Lower lobe of right lung (tissue), 2 donors: ENCODE measurements at regions of chrX and their contacts with region 1.

Region 1: DNA sequence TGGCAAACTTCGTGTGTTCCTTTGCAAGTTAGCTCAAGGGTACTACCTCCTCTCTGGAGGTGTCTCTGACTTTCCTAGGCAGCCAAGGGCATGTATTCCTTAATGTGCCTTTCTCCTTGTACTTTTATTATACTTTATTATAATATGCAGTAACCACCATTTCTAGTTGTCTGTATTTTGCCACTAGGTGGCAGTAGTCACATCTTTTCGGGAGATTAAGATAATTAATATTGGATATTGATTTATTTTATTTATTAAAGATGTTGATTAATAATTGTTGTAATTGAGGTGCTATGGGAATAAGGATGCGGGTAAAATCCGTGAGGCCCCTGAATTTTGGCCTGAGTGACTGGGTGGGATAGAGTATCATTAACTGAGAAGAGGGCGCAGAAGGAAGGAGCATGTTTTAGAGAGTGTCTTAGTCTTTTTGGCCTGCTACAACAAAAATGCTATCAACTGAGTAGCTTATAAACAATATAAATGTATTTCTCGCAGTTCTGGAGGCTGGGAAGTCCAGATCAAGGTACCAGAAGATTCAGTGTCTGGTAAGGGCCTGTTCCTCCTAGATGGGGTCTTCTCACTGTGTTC is 153.3 kb downstream of the TMEM164 start:
- DNase-seq: no peak
- ATAC-seq: no peak
- H3K4me3 ChIP-seq: no peak overlapping the region
- H3K27ac ChIP-seq: no peak overlapping the region
- H3K4me1 ChIP-seq: no peaks in the 10 kb centered on the region
- H3K27me3 ChIP-seq: no peaks in the 10 kb centered on the region
- CTCF ChIP-seq: peak; percentile 43

Region 2: GRCh38 chrX:109760923-109761253 is 395.4 kb before region 1 on chrX:
- intact Hi-C with region 1: no loop called
- DNase-seq: no peak
- ATAC-seq: peak in 1 of 2 donors; percentile 77
- H3K4me3 ChIP-seq: no peak overlapping the region
- H3K27ac ChIP-seq: peak overlapping the region; percentile 18
- H3K4me1 ChIP-seq: no peaks in the 10 kb centered on the region
- H3K27me3 ChIP-seq: no peaks in the 10 kb centered on the region
- CTCF ChIP-seq: no peak

Region 3: GRCh38 chrX:110310000-110310790 is 153.9 kb after region 1 on chrX:
- intact Hi-C with region 1: no loop called
- DNase-seq: no peak
- ATAC-seq: no peak
- H3K4me3 ChIP-seq: no peak overlapping the region
- H3K27ac ChIP-seq: no peak overlapping the region
- H3K4me1 ChIP-seq: no peaks in the 10 kb centered on the region
- H3K27me3 ChIP-seq: no peaks in the 10 kb centered on the region
- CTCF ChIP-seq: no peak

Region 4: DNA sequence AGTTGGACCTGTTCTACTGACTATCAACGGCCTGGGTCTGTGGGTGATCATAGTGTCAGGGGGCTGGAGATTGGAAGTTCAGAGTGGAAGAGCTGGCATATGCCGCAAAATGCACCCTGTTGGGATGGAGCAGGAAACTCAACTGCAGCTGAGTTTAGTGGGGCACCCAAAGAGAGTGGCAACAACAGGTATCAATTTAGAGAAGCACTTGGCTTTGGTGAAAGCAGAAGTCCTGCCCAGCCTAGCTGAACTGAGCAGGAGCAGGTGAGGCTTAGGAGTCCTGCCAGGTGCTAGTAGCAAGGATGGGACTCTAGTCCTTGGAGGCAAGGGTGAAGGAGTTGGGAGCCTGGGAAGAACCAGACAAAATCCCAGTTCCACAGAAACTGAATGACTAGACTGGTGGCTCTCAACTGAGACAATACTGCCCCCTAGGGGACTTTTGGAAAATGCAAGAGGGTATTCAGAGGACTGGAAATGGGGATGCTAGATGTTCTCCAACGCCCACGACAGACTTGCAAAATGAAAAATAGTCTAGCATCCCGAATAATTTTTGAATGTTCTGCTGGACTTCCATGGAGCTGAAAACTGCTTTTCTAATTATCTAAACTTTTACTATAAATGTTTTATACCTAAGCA is 251.8 kb after region 1 on chrX:
- intact Hi-C with region 1: loop called (anchors 5 kb)
- DNase-seq: no peak
- ATAC-seq: peak; percentile 70 to 83
- H3K4me3 ChIP-seq: no peak overlapping the region
- H3K27ac ChIP-seq: no peak overlapping the region
- H3K4me1 ChIP-seq: no peaks in the 10 kb centered on the region
- H3K27me3 ChIP-seq: no peaks in the 10 kb centered on the region
- CTCF ChIP-seq: peak; percentile 72

Region 5: GRCh38 chrX:111254896-111255693 is 1098.8 kb after region 1 on chrX:
- intact Hi-C with region 1: no loop called
- DNase-seq: no peak
- ATAC-seq: no peak
- H3K4me3 ChIP-seq: no peak overlapping the region
- H3K27ac ChIP-seq: no peak overlapping the region
- H3K4me1 ChIP-seq: no peaks in the 10 kb centered on the region
- H3K27me3 ChIP-seq: no peaks in the 10 kb centered on the region
- CTCF ChIP-seq: no peak